GM12878 (cell line): ENCODE measurements at regions of chr20 and their contacts with region 1.

Region 1: DNA sequence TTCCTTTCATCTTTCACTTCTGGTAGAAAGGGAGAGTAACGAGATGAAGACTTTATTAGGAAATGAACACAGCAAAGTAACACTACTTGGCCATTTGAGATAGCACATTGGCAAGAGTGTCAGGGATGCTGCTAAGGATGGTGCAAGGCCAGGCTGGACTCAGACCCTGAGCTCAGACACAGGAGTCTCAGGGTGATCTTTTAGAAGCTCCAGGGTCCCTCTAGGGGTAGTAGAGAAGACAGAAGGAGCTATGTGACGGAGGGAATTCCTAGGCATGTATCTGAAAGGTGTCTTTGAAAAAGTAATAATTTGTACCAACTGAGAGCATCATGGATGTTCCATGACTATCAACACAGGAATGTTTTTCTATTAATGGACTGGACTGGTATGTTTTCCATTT is 436.5 kb downstream of the DHX35 start:
- DNase-seq: no peak
- ATAC-seq: peak; percentile 59; the same call in 2 of the 3 replicates
- H3K4me3 ChIP-seq: no peak overlapping the region
- H3K27ac ChIP-seq: no peak overlapping the region
- H3K4me1 ChIP-seq: no peaks in the 10 kb centered on the region
- H3K27me3 ChIP-seq: no peaks in the 10 kb centered on the region; a peak in 2 of 4 replicates
- CTCF ChIP-seq: peak; percentile 30 to 32 (median 30); a peak in 4 of 6 replicates
- EP300 ChIP-seq: no peak
- POLR2A ChIP-seq: no peak
- RAD21 ChIP-seq: peak; percentile 37

Region 2: GRCh38 chr20:39112178-39112743 is 286.4 kb before region 1 on chr20:
- CTCF ChIA-PET with region 1: no interaction called
- POLR2A ChIA-PET with region 1: no interaction called
- RAD21 ChIA-PET with region 1: no interaction called
- SMC1A ChIA-PET with region 1: no interaction called
- in situ Hi-C with region 1: no loop called
- intact Hi-C with region 1: loop called (anchors 5 kb)
- DNase-seq: no peak
- ATAC-seq: peak; percentile 94
- H3K4me3 ChIP-seq: no peak overlapping the region
- H3K27ac ChIP-seq: no peak overlapping the region
- H3K4me1 ChIP-seq: peaks cover 5% of the 10 kb centered on the region; the same call in 1 of the 2 replicates
- H3K27me3 ChIP-seq: no peaks in the 10 kb centered on the region; a peak in 1 of 4 replicates
- CTCF ChIP-seq: peak; percentile 54 to 62 (median 57); a peak in 5 of 6 replicates
- EP300 ChIP-seq: no peak
- POLR2A ChIP-seq: no peak
- RAD21 ChIP-seq: peak; percentile 68

Region 3: DNA sequence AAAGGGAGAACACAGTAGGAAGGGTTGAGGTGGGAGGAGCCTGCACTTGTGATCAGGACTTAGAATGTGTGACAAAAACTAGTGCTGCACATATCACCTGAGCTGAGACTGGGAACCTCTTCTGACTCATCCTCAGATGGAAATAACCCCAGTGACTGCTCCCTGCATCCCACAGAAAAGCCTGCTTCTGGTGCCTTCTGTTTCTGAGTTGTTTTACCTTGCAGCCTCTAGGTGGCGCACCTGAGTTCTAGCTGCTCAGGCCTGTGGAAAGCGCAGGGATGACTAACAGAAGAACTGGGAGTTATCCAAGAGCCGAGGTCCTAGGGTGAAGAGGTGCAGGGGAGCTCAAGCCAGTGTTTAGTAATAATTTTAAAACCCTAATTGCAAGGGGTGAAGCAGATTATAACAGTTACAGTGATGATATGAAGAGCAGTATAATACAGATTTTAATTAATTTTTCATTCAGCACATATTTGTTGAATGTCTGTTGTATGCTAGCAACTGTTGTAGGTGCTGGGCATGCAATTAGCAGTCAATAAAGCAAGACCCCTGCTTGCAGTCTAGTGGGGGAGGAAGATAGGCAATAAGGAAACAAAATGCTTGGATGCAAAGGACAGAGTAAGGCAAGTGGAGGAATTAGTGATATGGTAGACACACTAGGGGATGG is 134.0 kb before region 1 on chr20:
- CTCF ChIA-PET with region 1: interaction called, 19 read pairs
- POLR2A ChIA-PET with region 1: no interaction called
- RAD21 ChIA-PET with region 1: interaction called, 17 read pairs
- SMC1A ChIA-PET with region 1: interaction called, 9 read pairs
- in situ Hi-C with region 1: no loop called
- intact Hi-C with region 1: no loop called
- DNase-seq: no peak
- ATAC-seq: peak; percentile 80
- H3K4me3 ChIP-seq: no peak overlapping the region
- H3K27ac ChIP-seq: no peak overlapping the region
- H3K4me1 ChIP-seq: no peaks in the 10 kb centered on the region
- H3K27me3 ChIP-seq: no peaks in the 10 kb centered on the region
- CTCF ChIP-seq: peak; percentile 72 to 88 (median 88)
- EP300 ChIP-seq: no peak
- POLR2A ChIP-seq: no peak
- RAD21 ChIP-seq: peak; percentile 54

Region 4: DNA sequence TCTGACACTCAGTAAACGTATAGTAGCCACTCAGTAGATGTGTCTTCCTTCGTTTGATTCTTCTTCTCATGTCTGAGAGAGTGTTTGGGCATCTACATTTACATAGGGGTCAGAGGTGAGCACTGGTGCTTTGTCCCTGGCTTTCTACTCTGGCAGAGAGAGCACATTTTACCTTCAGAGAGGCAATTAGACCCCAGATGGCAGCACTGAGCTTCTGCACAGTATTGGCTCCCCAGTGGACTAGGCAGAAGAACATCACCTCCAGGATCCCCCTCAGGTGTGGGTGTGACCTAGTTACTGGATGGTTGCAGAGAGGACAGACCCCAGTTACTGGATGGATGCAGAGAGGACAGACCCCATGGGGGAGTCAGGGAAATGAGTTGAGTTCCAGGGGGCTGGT is 109.3 kb before region 1 on chr20:
- CTCF ChIA-PET with region 1: interaction called, 42 read pairs
- POLR2A ChIA-PET with region 1: no interaction called
- RAD21 ChIA-PET with region 1: interaction called, 25 read pairs
- SMC1A ChIA-PET with region 1: interaction called, 24 read pairs
- in situ Hi-C with region 1: no loop called
- intact Hi-C with region 1: loop called (anchors 2 kb)
- DNase-seq: no peak
- ATAC-seq: peak; percentile 73
- H3K4me3 ChIP-seq: no peak overlapping the region
- H3K27ac ChIP-seq: no peak overlapping the region
- H3K4me1 ChIP-seq: no peaks in the 10 kb centered on the region
- H3K27me3 ChIP-seq: no peaks in the 10 kb centered on the region
- CTCF ChIP-seq: peak; percentile 43 to 70 (median 43); a peak in 4 of 6 replicates
- EP300 ChIP-seq: no peak
- POLR2A ChIP-seq: no peak
- RAD21 ChIP-seq: peak; percentile 54

Region 5: GRCh38 chr20:39549733-39550132 is 151.1 kb after region 1 on chr20:
- CTCF ChIA-PET with region 1: no interaction called
- POLR2A ChIA-PET with region 1: no interaction called
- RAD21 ChIA-PET with region 1: no interaction called
- SMC1A ChIA-PET with region 1: no interaction called
- in situ Hi-C with region 1: no loop called
- intact Hi-C with region 1: no loop called
- DNase-seq: no peak
- ATAC-seq: no peak
- H3K4me3 ChIP-seq: no peak overlapping the region
- H3K27ac ChIP-seq: no peak overlapping the region
- H3K4me1 ChIP-seq: no peaks in the 10 kb centered on the region
- H3K27me3 ChIP-seq: no peaks in the 10 kb centered on the region
- CTCF ChIP-seq: no peak
- EP300 ChIP-seq: no peak
- POLR2A ChIP-seq: no peak
- RAD21 ChIP-seq: no peak